Right ventricle myocardium superior (tissue), 1 donor: ENCODE measurements at regions of chr6 and their contacts with region 1.

Region 1: GRCh38 chr6:140427849-140428248 is 1053.4 kb upstream of the CITED2 start:
- DNase-seq: no peak
- ATAC-seq: no peak

Region 2: GRCh38 chr6:140401761-140402160 is 26.1 kb before region 1 on chr6:
- intact Hi-C with region 1: loop called (anchors 2 kb)
- DNase-seq: no peak
- ATAC-seq: no peak

Region 3: GRCh38 chr6:140475086-140475485 is 47.2 kb after region 1 on chr6:
- intact Hi-C with region 1: no loop called
- DNase-seq: no peak
- ATAC-seq: no peak